ENCODE measurements at regions of chr5 and their contacts with region 1.

Region 1: GRCh38 chr5:140639148-140639979 is at the start of gene TMCO6:
- DNase-seq: peak; percentile 91
- ATAC-seq: peak; percentile 99
- H3K4me3 Mint-ChIP-seq: peak within 1 kb of the TSS; percentile 92
- H3K27ac Mint-ChIP-seq: peak within 1 kb of the TSS; percentile 98
- H3K4me1 Mint-ChIP-seq: peaks cover 29% of the 10 kb centered on the region
- H3K27me3 Mint-ChIP-seq: no peaks in the 10 kb centered on the region
- CTCF ChIP-seq: no peak
- total RNA-seq, gene TMCO6: 20.1 and 23.3 TPM in 2 replicates

Region 2: DNA sequence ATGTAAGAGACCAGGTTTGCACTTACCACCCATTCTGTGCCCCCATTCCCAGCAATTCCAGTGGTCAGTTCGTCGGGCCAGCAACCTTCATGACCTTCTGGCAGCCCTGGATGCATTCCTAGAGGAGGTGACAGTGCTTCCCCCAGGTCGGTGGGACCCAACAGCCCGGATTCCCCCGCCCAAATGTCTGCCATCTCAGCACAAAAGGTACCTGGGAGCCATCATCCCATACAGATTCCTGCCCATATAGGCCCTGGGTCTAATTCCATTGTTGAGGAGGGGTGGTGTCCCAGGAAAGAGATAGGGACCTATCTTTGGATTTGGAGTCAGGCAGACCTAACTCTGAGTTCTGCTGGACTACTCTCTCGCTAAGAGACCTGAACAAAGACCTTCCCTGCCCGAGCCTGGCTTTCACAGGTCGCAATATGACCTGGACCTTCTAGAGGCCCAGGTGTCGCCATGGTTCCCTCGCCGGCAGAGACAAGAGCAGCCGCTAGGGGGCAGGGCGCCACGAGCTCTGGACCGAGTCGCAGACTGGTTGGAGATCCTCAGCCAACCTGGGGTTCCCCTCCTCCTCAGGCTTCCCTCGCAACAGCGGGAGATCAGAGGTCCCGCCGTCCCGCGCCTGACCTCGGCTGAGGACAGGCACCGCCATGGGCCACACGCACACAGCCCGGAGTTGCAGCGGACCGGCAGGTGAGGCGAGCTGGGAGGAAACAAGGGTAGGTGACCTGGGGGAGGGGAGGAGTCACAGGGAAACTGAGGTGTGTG is 276.3 kb before region 1 on chr5:
- CTCF ChIA-PET with region 1: no interaction called
- POLR2A ChIA-PET with region 1: no interaction called
- intact Hi-C with region 1: loop called (anchors 2 kb)
- DNase-seq: peak; percentile 70
- ATAC-seq: peak; percentile 96
- H3K4me3 Mint-ChIP-seq: peak overlapping the region; percentile 76
- H3K27ac Mint-ChIP-seq: no peak overlapping the region
- H3K4me1 Mint-ChIP-seq: peaks cover 6% of the 10 kb centered on the region
- H3K27me3 Mint-ChIP-seq: no peaks in the 10 kb centered on the region
- CTCF ChIP-seq: peak; percentile 70

Region 3: GRCh38 chr5:140547508-140548299 is 91.7 kb before region 1 on chr5 and contains the start of gene EIF4EBP3:
- CTCF ChIA-PET with region 1: interaction called, 8 read pairs
- POLR2A ChIA-PET with region 1: interaction called, 16 read pairs
- intact Hi-C with region 1: loop called (anchors 1 kb)
- DNase-seq: peak; percentile 74
- ATAC-seq: peak; percentile 97
- H3K4me3 Mint-ChIP-seq: peak within 1 kb of the TSS; percentile 86
- H3K27ac Mint-ChIP-seq: peak within 1 kb of the TSS; percentile 95
- H3K4me1 Mint-ChIP-seq: peaks cover 28% of the 10 kb centered on the region
- H3K27me3 Mint-ChIP-seq: no peaks in the 10 kb centered on the region
- CTCF ChIP-seq: no peak
- total RNA-seq, gene EIF4EBP3: 14.4 and 18.2 TPM in 2 replicates

Region 4: GRCh38 chr5:140564196-140565023 is 75.0 kb before region 1 on chr5 and contains the starts of genes APBB3 and SLC35A4:
- CTCF ChIA-PET with region 1: no interaction called
- POLR2A ChIA-PET with region 1: interaction called, 4 read pairs
- intact Hi-C with region 1: loop called (anchors 1 kb)
- DNase-seq: peak; percentile 89
- ATAC-seq: peak; percentile 90
- H3K4me3 Mint-ChIP-seq: peak within 1 kb of the TSS; percentile 98
- H3K27ac Mint-ChIP-seq: peak within 1 kb of the TSS; percentile 90
- H3K4me1 Mint-ChIP-seq: peaks cover 57% of the 10 kb centered on the region
- H3K27me3 Mint-ChIP-seq: no peaks in the 10 kb centered on the region
- CTCF ChIP-seq: no peak
- total RNA-seq, gene APBB3: 36.0 and 37.5 TPM in 2 replicates
- total RNA-seq, gene SLC35A4: 76.0 and 77.9 TPM in 2 replicates

Region 5: GRCh38 chr5:140690941-140691924 is 51.9 kb after region 1 on chr5 and contains the starts of genes HARS1 and HARS2:
- CTCF ChIA-PET with region 1: no interaction called
- POLR2A ChIA-PET with region 1: interaction called, 7 read pairs
- intact Hi-C with region 1: loop called (anchors 1 kb)
- DNase-seq: peak; percentile 70
- ATAC-seq: peak; percentile 95
- H3K4me3 Mint-ChIP-seq: peak within 1 kb of the TSS; percentile 100
- H3K27ac Mint-ChIP-seq: peak within 1 kb of the TSS; percentile 97
- H3K4me1 Mint-ChIP-seq: peaks cover 31% of the 10 kb centered on the region
- H3K27me3 Mint-ChIP-seq: no peaks in the 10 kb centered on the region
- CTCF ChIP-seq: no peak
- total RNA-seq, gene HARS1: 78.2 and 84.0 TPM in 2 replicates
- total RNA-seq, gene HARS2: 45.7 and 48.5 TPM in 2 replicates

Region 6: DNA sequence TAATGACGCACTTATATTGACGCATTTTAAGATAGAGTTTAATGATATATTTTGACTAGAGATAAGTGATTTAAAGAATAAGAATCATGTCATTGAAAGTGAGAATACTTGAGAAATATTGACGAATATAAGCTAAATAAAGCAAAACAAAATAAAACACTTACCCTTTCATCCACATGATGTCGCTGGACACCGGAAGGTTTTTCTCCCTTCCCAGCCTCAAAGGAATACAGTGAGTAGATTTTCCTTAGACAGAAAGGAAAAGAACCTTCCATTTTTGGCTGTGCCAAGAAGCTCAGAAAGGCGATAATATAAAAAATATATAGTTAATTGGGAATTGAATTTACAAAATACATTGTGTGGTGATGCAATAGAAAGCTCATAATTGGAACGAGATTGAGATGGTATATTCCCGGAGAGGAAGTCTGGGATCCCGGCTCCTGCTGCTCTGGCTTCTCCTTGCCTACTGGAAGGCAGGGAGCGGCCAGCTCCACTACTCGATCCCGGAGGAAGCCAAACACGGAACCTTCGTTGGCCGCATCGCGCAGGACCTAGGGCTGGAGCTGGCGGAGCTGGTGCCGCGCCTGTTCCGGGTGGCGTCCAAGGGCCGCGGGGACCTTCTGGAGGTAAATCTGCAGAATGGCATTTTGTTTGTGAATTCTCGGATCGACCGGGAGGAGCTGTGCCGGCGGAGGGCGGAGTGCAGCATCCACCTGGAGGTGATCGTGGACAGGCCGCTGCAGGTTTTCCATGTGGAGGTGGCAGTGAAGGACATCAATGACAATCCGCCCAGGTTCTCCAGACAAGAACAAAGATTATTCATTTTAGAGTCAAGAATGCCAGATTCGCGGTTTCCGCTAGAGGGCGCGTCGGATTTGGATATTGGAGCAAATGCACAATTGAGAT is 182.3 kb after region 1 on chr5 and contains the start of gene PCDHA5:
- CTCF ChIA-PET with region 1: no interaction called
- POLR2A ChIA-PET with region 1: no interaction called
- intact Hi-C with region 1: no loop called
- DNase-seq: no peak
- ATAC-seq: no peak
- H3K4me3 Mint-ChIP-seq: no peak within 1 kb of the TSS
- H3K27ac Mint-ChIP-seq: no peak within 1 kb of the TSS
- H3K4me1 Mint-ChIP-seq: no peaks in the 10 kb centered on the region
- H3K27me3 Mint-ChIP-seq: peaks cover 2% of the 10 kb centered on the region
- CTCF ChIP-seq: no peak
- total RNA-seq, gene PCDHA5: not detected in 2 replicates